ENCODE measurements at regions of chr6 and their contacts with region 1.

Region 1: GRCh38 chr6:122947355-122947754 is 48.7 kb upstream of the CLVS2 start:
- DNase-seq: no peak
- ATAC-seq: peak; percentile 68
- H3K4me3 ChIP-seq: no peak overlapping the region
- H3K27ac ChIP-seq: no peak overlapping the region
- H3K4me1 ChIP-seq: no peaks in the 10 kb centered on the region
- H3K27me3 ChIP-seq: no peaks in the 10 kb centered on the region
- CTCF ChIP-seq: peak; percentile 45
- EP300 ChIP-seq: no peak
- POLR2A ChIP-seq: no peak
- RAD21 ChIP-seq: peak; percentile 56; the same call in 1 of the 2 replicates

Region 2: GRCh38 chr6:122495612-122496011 is 451.7 kb before region 1 on chr6:
- CTCF ChIA-PET with region 1: no interaction called
- POLR2A ChIA-PET with region 1: no interaction called
- in situ Hi-C with region 1: no loop called
- intact Hi-C with region 1: no loop called
- DNase-seq: no peak
- ATAC-seq: no peak
- H3K4me3 ChIP-seq: no peak overlapping the region
- H3K27ac ChIP-seq: no peak overlapping the region
- H3K4me1 ChIP-seq: no peaks in the 10 kb centered on the region
- H3K27me3 ChIP-seq: no peaks in the 10 kb centered on the region
- CTCF ChIP-seq: no peak
- EP300 ChIP-seq: no peak
- POLR2A ChIP-seq: no peak
- RAD21 ChIP-seq: no peak

Region 3: GRCh38 chr6:122894791-122895190 is 52.6 kb before region 1 on chr6:
- CTCF ChIA-PET with region 1: no interaction called
- POLR2A ChIA-PET with region 1: no interaction called
- in situ Hi-C with region 1: no loop called
- intact Hi-C with region 1: no loop called
- DNase-seq: no peak
- ATAC-seq: no peak
- H3K4me3 ChIP-seq: no peak overlapping the region
- H3K27ac ChIP-seq: no peak overlapping the region
- H3K4me1 ChIP-seq: no peaks in the 10 kb centered on the region
- H3K27me3 ChIP-seq: no peaks in the 10 kb centered on the region
- CTCF ChIP-seq: no peak
- EP300 ChIP-seq: no peak
- POLR2A ChIP-seq: no peak
- RAD21 ChIP-seq: no peak

Region 4: DNA sequence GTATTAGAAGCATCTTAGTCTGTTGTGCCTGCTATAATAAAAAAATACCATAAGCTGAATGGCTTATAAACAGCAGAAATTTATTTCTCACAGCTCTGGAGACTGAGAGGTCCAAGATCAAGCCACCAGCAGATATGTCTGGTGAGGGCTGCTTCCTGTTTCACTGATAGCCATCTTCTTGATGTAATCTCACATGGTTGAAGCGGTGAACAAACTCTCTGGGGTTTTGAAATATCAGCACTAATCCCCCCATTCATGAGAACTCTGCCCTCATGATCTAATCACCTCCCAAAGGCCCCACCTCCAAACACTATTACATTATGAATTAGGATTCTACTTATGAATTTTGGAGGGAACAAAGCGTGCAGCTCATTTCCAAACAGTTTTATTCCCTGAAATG is 37.0 kb after region 1 on chr6:
- CTCF ChIA-PET with region 1: no interaction called
- POLR2A ChIA-PET with region 1: no interaction called
- in situ Hi-C with region 1: no loop called
- intact Hi-C with region 1: loop called (anchors 1 kb)
- DNase-seq: no peak
- ATAC-seq: no peak
- H3K4me3 ChIP-seq: no peak overlapping the region
- H3K27ac ChIP-seq: no peak overlapping the region
- H3K4me1 ChIP-seq: no peaks in the 10 kb centered on the region
- H3K27me3 ChIP-seq: no peaks in the 10 kb centered on the region
- CTCF ChIP-seq: no peak
- EP300 ChIP-seq: no peak
- POLR2A ChIP-seq: no peak
- RAD21 ChIP-seq: no peak

Measured in HepG2 (cell line).